ENCODE measurements at regions of chr10 and their contacts with region 1.

Region 1: DNA sequence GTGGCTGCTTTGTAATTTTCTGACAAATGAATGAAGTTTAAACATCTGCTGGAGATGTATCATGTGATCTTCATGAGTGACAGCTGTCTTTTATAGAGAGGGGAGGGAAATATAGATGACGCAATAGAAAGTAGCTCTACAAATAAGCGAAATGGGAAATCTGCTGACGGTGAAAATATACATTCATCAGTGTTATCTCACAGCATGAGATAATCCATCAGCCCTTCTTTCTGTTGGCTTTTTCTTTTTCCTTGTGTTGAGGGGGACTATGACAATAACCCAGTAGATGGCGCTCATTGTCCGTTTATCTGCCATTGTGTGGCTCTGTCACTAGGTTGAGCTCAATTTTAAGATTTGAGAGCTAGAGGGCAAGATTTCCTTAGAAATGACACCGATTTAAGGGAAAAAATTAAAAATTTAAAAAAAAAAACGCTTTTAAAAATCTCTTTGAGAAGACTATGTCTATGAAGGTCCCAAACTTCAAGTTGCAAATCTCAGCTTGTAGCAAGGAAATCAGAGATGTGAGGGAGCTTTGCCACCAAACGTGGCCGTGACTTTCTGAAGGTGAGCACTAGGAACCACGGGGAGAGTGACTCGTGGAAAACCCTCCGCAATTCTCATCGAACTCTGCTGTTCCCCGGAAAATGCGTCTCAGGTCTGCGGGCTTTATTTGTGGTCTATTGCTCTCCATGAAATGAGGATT is 114.6 kb upstream of the SFMBT2 start:
- DNase-seq: peak; percentile 83
- H3K4me3 Mint-ChIP-seq: no peak overlapping the region
- H3K27ac Mint-ChIP-seq: no peak overlapping the region
- H3K4me1 Mint-ChIP-seq: peaks cover 4% of the 10 kb centered on the region
- H3K27me3 Mint-ChIP-seq: no peaks in the 10 kb centered on the region

Region 2: GRCh38 chr10:7515439-7515838 is 10.0 kb before region 1 on chr10:
- CTCF ChIA-PET with region 1: interaction called, 12 read pairs
- intact Hi-C with region 1: no loop called
- DNase-seq: no peak
- H3K4me3 Mint-ChIP-seq: no peak overlapping the region
- H3K27ac Mint-ChIP-seq: no peak overlapping the region
- H3K4me1 Mint-ChIP-seq: peaks cover 21% of the 10 kb centered on the region
- H3K27me3 Mint-ChIP-seq: no peaks in the 10 kb centered on the region

Region 3: GRCh38 chr10:7546385-7546967 is 21.0 kb after region 1 on chr10:
- CTCF ChIA-PET with region 1: interaction called, 11 read pairs
- intact Hi-C with region 1: no loop called
- DNase-seq: no peak
- H3K4me3 Mint-ChIP-seq: no peak overlapping the region
- H3K27ac Mint-ChIP-seq: no peak overlapping the region
- H3K4me1 Mint-ChIP-seq: no peaks in the 10 kb centered on the region
- H3K27me3 Mint-ChIP-seq: no peaks in the 10 kb centered on the region

Region 4: DNA sequence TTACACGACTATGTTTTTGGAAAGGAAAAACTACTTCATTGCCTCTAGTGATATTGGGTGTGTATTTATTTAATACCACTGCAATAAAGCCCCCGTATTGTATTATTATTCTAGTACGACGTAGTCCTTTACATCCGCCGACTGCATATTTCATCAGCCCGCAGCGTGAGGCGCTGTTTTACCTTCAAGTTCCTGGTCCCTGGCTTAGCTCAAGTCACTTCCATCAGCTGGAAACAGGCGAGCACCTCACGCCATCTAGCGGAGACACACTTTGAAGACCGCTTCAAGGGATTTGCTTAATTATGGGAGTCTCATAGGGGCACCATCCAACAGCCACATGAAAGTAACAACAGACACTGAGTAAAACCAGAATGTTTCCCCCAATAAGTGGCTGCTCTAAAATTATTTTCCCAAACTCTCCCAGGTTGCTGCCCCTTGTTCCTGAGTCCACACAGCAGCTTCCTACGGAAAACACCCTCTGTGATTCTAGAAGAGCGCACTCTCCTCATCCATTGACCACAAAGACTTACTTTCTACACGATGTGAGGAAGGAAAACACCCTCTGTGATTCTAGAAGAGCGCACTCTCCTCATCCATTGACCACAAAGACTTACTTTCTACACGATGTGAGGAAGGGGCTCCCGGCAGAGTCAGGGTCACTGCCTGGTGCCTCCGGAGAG is 161.9 kb after region 1 on chr10:
- CTCF ChIA-PET with region 1: interaction called, 85 read pairs
- intact Hi-C with region 1: loop called (anchors 1 kb)
- DNase-seq: peak; percentile 92
- H3K4me3 Mint-ChIP-seq: no peak overlapping the region
- H3K27ac Mint-ChIP-seq: no peak overlapping the region
- H3K4me1 Mint-ChIP-seq: peaks cover 10% of the 10 kb centered on the region
- H3K27me3 Mint-ChIP-seq: no peaks in the 10 kb centered on the region

Region 5: DNA sequence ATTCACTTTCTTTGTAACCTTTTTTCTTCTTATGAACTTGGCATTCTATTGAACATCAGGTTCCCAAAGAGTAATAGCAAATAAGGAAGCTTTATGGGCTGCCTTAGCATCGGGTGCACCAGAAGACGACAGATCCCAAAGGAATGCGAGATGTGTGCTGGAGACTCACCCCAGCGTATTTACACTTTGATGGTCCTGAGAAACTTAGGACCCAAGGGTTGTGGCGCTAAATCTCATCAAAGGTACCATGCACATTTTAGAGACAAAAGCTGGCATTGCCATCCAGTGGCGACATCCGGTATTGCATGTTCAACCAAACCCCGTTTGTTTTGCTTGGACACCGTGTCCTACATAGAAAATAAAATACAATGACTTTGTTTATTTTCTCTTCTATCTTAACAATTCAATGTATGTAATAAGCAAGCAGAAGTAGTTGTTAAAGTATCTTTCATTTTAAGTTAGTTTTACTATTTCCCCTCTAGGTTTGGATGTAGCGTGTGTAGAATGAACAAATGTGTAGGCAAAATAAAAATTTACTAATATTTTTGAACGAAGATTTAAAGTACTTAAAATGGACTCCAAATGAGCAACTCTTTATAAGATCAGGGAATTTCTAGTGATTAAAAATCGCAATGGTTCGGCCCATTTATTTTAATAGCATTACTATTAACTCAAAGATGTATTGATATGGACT is 1683.8 kb after region 1 on chr10:
- CTCF ChIA-PET with region 1: no interaction called
- intact Hi-C with region 1: loop called (anchors 1 kb)
- DNase-seq: peak; percentile 86
- H3K4me3 Mint-ChIP-seq: no peak overlapping the region
- H3K27ac Mint-ChIP-seq: no peak overlapping the region
- H3K4me1 Mint-ChIP-seq: peaks cover 3% of the 10 kb centered on the region
- H3K27me3 Mint-ChIP-seq: peaks cover 2% of the 10 kb centered on the region